MCF 10A (cell line): ENCODE measurements at regions of chr2 and their contacts with region 1.

Region 1: DNA sequence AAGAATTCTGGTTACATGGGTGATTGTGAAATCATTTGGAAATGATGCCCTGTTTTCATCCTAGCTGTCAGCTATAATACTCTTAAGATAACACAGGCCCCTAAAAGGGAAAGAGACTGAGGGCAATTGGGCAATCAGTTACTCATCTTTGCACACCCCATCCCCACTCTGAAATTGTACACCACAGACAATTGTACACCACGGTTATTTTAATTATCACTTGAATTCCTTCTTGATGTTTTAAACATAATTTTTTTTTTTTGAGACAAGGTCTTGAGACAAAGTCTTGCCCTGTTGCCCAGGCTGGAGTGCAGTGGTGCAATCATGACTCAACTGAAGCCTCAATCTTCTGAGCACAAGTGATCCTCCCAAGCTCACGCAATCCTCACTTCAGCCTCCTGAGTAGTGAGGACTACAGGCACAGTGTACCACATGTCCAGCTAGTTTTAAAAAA is 862.4 kb upstream of the ACVR2A start:
- DNase-seq: peak; percentile 94
- H3K4me3 Mint-ChIP-seq: no peak overlapping the region
- H3K27ac Mint-ChIP-seq: peak overlapping the region; percentile 62
- H3K4me1 Mint-ChIP-seq: peaks cover 24% of the 10 kb centered on the region
- H3K27me3 Mint-ChIP-seq: no peaks in the 10 kb centered on the region
- CTCF ChIP-seq: no peak

Region 2: GRCh38 chr2:147030966-147031720 is 48.7 kb after region 1 on chr2:
- CTCF ChIA-PET with region 1: no interaction called
- POLR2A ChIA-PET with region 1: interaction called, 8 read pairs
- intact Hi-C with region 1: loop called (anchors 5 kb)
- DNase-seq: peak; percentile 63
- H3K4me3 Mint-ChIP-seq: no peak overlapping the region
- H3K27ac Mint-ChIP-seq: no peak overlapping the region
- H3K4me1 Mint-ChIP-seq: peaks cover 28% of the 10 kb centered on the region
- H3K27me3 Mint-ChIP-seq: no peaks in the 10 kb centered on the region
- CTCF ChIP-seq: no peak

Region 3: GRCh38 chr2:147499785-147500184 is 517.4 kb after region 1 on chr2:
- CTCF ChIA-PET with region 1: no interaction called
- POLR2A ChIA-PET with region 1: no interaction called
- intact Hi-C with region 1: no loop called
- DNase-seq: no peak
- H3K4me3 Mint-ChIP-seq: no peak overlapping the region
- H3K27ac Mint-ChIP-seq: no peak overlapping the region
- H3K4me1 Mint-ChIP-seq: no peaks in the 10 kb centered on the region
- H3K27me3 Mint-ChIP-seq: no peaks in the 10 kb centered on the region
- CTCF ChIP-seq: no peak